ENCODE measurements at regions of chr3 and their contacts with region 1.

Region 1: GRCh38 chr3:190504354-190505125 is 9.3 kb upstream of the IL1RAP start:
- DNase-seq: no peak
- H3K4me3 ChIP-seq: no peak overlapping the region
- H3K27ac ChIP-seq: no peak overlapping the region
- H3K4me1 ChIP-seq: no peaks in the 10 kb centered on the region
- H3K27me3 ChIP-seq: no peaks in the 10 kb centered on the region
- CTCF ChIP-seq: 0 out of 2 replicates have a peak, but pooled peaks have one; percentile 25

Region 2: GRCh38 chr3:190467922-190468321 is 36.6 kb before region 1 on chr3:
- CTCF ChIA-PET with region 1: no interaction called
- POLR2A ChIA-PET with region 1: no interaction called
- intact Hi-C with region 1: loop called (anchors 5 kb)
- DNase-seq: no peak
- H3K4me3 ChIP-seq: no peak overlapping the region
- H3K27ac ChIP-seq: no peak overlapping the region
- H3K4me1 ChIP-seq: no peaks in the 10 kb centered on the region
- H3K27me3 ChIP-seq: no peaks in the 10 kb centered on the region
- CTCF ChIP-seq: no peak